ENCODE measurements at regions of chr7 and their contacts with region 1.

Region 1: DNA sequence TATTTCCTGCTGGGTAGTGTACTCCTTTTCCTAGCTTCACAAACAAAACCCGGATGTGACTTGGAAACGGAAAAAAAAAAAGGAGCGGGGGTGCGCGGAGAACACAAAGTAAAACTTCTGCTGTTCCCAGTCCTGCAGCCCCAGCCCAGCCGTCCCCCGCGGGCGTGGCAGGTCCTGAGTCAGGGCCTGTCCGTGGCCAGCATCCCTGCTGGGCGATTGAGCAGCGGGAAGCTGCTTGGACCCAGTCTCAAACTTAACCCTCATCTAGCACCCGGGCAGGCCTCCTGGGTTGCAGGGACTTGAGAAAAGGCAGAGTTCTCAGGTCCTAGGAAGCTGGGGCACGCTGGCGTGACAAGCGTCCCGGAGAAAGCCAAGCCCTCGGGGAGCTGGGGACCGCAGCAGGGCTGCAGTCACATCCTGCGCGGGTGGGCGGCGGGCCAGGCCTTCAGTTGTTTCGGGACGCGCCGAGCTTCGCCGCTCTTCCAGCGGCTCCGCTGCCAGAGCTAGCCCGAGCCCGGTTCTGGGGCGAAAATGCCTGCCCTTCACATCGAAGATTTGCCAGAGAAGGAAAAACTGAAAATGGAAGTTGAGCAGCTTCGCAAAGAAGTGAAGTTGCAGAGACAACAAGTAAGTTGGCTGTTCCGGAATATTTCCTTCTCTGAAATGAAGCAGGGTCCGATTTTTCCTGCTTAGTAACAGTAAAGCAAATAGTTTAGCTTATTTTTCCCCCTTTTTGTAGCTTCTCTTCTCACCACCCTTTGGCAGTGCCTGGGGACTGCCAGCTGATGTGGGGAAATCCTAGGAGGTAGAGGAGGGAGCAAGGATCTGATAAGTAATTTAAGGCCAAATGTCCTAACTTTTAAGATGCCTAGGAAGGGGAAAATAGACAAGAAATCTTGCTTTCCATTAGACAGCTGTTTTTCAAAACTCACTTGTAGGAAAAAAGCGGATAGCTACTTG is at the start of gene GNG11:
- DNase-seq: peak; percentile 72
- H3K4me3 Mint-ChIP-seq: peak within 1 kb of the TSS; percentile 76
- H3K27ac Mint-ChIP-seq: peak within 1 kb of the TSS; percentile 75
- H3K4me1 Mint-ChIP-seq: peaks cover 8% of the 10 kb centered on the region
- H3K27me3 Mint-ChIP-seq: no peaks in the 10 kb centered on the region
- CTCF ChIP-seq: no peak
- total RNA-seq, gene GNG11: 3.9 and 4.6 TPM in 2 replicates

Region 2: DNA sequence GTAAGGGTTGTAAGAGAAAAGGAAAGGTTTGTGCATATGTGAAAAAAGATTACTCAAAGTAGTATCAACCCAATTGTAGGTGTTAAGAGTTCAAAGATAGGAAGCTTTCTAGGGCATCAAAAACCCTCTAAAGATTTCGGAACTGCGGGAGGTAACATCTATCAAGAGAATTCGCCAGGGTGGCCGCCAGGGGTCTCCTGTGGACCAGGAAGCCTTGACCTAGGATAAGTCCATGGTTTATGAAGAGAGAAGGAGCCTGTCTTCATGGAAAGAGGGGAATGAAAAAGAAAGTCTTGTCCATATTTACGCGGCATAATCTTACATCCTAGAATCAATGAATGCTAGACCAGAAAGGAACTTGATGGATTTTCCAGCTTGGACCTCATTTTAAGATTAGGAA is 206.7 kb before region 1 on chr7:
- CTCF ChIA-PET with region 1: no interaction called
- POLR2A ChIA-PET with region 1: no interaction called
- intact Hi-C with region 1: loop called (anchors 10 kb)
- DNase-seq: peak; percentile 54
- H3K4me3 Mint-ChIP-seq: no peak overlapping the region
- H3K27ac Mint-ChIP-seq: no peak overlapping the region
- H3K4me1 Mint-ChIP-seq: peaks cover 18% of the 10 kb centered on the region
- H3K27me3 Mint-ChIP-seq: peaks cover 74% of the 10 kb centered on the region
- CTCF ChIP-seq: peak; percentile 48

Region 3: DNA sequence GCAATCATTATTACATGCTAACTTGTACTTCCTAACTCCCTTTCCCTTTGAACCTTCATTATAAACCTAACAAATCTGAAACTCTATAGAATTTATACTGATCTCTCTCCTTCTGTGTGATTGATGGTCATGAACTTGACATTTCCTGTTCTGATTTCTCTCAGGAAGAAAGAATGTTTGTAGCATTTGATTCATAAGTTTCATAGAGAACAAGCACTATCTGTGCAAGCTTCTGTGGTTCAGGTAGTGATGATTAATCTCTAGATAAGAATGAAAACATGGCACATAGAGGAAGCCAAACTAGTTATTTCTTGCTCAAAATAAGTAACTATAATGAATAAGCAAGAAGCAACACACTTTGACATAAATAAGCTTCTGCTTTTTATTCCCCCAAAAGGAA is 65.6 kb before region 1 on chr7:
- CTCF ChIA-PET with region 1: no interaction called
- POLR2A ChIA-PET with region 1: no interaction called
- intact Hi-C with region 1: no loop called
- DNase-seq: peak; percentile 0
- H3K4me3 Mint-ChIP-seq: no peak overlapping the region
- H3K27ac Mint-ChIP-seq: peak overlapping the region; percentile 35
- H3K4me1 Mint-ChIP-seq: peaks cover 39% of the 10 kb centered on the region
- H3K27me3 Mint-ChIP-seq: no peaks in the 10 kb centered on the region
- CTCF ChIP-seq: no peak

Region 4: DNA sequence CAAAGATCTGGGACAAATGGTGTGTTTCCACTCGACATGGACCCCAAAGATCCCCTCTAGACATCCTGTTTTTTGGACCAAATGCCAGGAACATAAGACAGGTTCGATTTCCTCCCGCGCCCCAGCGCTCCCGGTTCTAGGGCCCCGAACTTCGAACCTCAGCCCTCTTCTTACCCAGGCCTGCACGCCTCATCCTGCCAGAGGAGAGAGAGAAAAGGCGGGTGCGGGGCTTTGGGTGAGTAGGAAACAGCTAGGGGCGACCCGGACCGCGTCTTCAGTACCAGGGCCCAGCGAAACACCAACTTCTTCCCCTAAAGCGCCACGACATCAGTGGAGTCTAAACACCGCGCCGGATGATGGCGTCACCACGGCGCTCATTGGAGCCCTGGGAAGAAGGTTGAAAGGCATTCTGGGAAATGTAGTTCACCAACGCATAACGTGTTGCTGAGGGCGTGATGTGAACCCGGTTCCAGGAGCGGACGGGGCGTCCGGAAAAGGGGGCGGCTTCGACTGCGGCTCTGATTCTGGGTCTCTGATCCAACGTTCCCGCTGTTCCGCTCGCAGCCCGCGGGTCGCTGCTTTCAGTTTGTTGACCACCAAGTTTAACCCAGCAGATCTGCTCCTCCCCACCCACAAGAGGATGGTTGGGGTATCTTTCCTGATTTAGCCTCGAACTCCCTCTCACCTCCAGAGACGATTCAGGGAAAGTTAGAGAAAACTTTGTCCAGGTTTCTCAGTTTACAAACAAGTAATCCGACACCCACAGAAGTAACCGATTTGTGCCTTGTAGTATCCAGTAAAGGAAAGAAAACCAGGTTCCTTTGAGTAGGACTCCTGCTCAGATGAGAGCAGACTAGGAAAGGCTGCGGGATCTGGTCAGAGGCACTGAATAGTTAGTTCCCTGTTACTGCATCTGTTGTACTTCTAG is 82.4 kb after region 1 on chr7 and contains the start of gene BET1:
- CTCF ChIA-PET with region 1: no interaction called
- POLR2A ChIA-PET with region 1: interaction called, 4 read pairs
- intact Hi-C with region 1: loop called (anchors 5 kb)
- DNase-seq: peak; percentile 98
- H3K4me3 Mint-ChIP-seq: peak within 1 kb of the TSS; percentile 100
- H3K27ac Mint-ChIP-seq: peak within 1 kb of the TSS; percentile 100
- H3K4me1 Mint-ChIP-seq: peaks cover 19% of the 10 kb centered on the region
- H3K27me3 Mint-ChIP-seq: no peaks in the 10 kb centered on the region
- CTCF ChIP-seq: no peak
- total RNA-seq, gene BET1: 54.4 and 72.7 TPM in 2 replicates